PC-3 (cell line): ENCODE measurements at regions of chr3 and their contacts with region 1.

Region 1: GRCh38 chr3:128481438-128481942 is 11.5 kb downstream of the GATA2 start:
- DNase-seq: no peak
- ATAC-seq: no peak
- H3K4me3 ChIP-seq: no peak overlapping the region
- H3K27ac ChIP-seq: no peak overlapping the region
- H3K4me1 ChIP-seq: peaks cover 43% of the 10 kb centered on the region
- H3K27me3 ChIP-seq: no peaks in the 10 kb centered on the region
- CTCF ChIP-seq: no peak

Region 2: GRCh38 chr3:127590593-127591477 is 890.7 kb before region 1 on chr3 and contains the start of gene TPRA1:
- CTCF ChIA-PET with region 1: no interaction called
- POLR2A ChIA-PET with region 1: interaction called, 14 read pairs
- intact Hi-C with region 1: no loop called
- DNase-seq: peak; percentile 92
- ATAC-seq: peak; percentile 71
- H3K4me3 ChIP-seq: peak within 1 kb of the TSS; percentile 83
- H3K27ac ChIP-seq: peak within 1 kb of the TSS; percentile 84
- H3K4me1 ChIP-seq: peaks cover 21% of the 10 kb centered on the region
- H3K27me3 ChIP-seq: no peaks in the 10 kb centered on the region
- CTCF ChIP-seq: 0 out of 2 replicates have a peak, but pooled peaks have one; percentile 31
- total RNA-seq, gene TPRA1: 25.7 and 34.0 TPM in 2 replicates

Region 3: DNA sequence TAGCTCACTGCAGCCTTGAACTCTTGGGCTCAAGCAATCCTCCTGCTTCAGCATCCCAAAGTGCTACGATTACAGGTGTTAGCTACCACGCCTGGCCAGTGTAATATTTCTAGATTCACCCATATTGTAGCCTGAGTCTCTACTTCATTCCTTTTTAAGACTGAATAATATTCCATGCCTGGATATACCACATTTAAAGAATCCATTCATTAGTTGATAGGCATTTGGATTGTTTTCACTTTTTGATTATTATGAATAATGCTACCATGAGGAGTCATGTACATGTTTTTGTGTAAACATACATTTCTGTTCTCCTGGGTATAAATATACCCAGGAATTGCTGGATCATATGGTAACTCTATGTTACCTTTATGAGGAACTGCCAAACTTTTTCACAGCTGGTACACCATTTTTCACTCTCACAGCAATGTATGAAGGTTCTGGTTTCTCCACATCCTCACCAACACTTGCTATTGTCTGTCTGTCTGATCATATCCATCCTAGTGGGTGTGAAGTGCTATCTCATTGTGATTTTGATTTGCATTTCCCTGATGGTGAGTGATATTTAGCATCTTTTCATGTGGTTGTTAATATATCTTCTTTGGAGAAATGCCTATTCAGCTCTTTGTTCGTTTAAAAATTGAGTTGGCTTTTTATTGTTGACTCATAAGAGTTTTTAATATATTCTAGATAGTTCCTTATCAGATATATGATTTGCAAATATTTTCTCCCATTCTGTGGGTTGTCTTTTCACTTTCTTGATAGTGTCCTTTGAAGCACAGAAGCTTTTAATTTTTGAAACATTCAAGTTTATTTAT is 295.7 kb before region 1 on chr3:
- CTCF ChIA-PET with region 1: no interaction called
- POLR2A ChIA-PET with region 1: interaction called, 20 read pairs
- intact Hi-C with region 1: no loop called
- DNase-seq: no peak
- ATAC-seq: no peak
- H3K4me3 ChIP-seq: no peak overlapping the region
- H3K27ac ChIP-seq: no peak overlapping the region
- H3K4me1 ChIP-seq: peaks cover 3% of the 10 kb centered on the region
- H3K27me3 ChIP-seq: no peaks in the 10 kb centered on the region
- CTCF ChIP-seq: no peak

Region 4: GRCh38 chr3:128466840-128467541 is 14.5 kb before region 1 on chr3 and contains the start of gene DNAJB8:
- CTCF ChIA-PET with region 1: no interaction called
- POLR2A ChIA-PET with region 1: no interaction called
- intact Hi-C with region 1: no loop called
- DNase-seq: no peak
- ATAC-seq: no peak
- H3K4me3 ChIP-seq: no peak within 1 kb of the TSS
- H3K27ac ChIP-seq: no peak within 1 kb of the TSS
- H3K4me1 ChIP-seq: no peaks in the 10 kb centered on the region
- H3K27me3 ChIP-seq: no peaks in the 10 kb centered on the region
- CTCF ChIP-seq: no peak
- total RNA-seq, gene DNAJB8: not detected in 2 replicates

Region 5: GRCh38 chr3:128590948-128591347 is 109.5 kb after region 1 on chr3:
- CTCF ChIA-PET with region 1: no interaction called
- POLR2A ChIA-PET with region 1: no interaction called
- intact Hi-C with region 1: no loop called
- DNase-seq: peak; percentile 19
- ATAC-seq: no peak
- H3K4me3 ChIP-seq: no peak overlapping the region
- H3K27ac ChIP-seq: no peak overlapping the region
- H3K4me1 ChIP-seq: peaks cover 3% of the 10 kb centered on the region; the same call in 1 of the 2 replicates
- H3K27me3 ChIP-seq: no peaks in the 10 kb centered on the region
- CTCF ChIP-seq: peak; percentile 41; the same call in 1 of the 2 replicates

Region 6: DNA sequence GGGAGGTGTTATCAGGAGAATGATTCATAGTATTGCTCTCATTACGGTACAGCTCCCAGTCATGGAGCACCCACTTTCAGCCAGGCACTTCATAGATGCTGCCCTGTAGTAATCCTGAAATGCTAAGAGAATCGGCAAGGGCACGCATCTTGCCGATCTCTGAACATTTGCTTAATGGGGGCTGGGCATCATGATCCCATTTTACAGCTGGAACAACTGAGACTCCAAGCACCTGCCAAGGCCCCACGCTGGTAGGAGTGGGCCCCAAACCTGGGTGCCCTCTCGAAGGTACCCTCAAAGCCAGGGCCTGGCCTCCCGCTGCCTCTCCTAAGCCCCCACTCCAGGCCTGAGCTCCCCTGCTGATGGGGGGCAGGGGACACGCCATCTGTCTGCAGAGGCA is 121.8 kb after region 1 on chr3:
- CTCF ChIA-PET with region 1: no interaction called
- POLR2A ChIA-PET with region 1: no interaction called
- intact Hi-C with region 1: no loop called
- DNase-seq: no peak
- ATAC-seq: no peak
- H3K4me3 ChIP-seq: no peak overlapping the region
- H3K27ac ChIP-seq: no peak overlapping the region
- H3K4me1 ChIP-seq: no peaks in the 10 kb centered on the region
- H3K27me3 ChIP-seq: no peaks in the 10 kb centered on the region
- CTCF ChIP-seq: no peak